ENCODE measurements at regions of chr10 and their contacts with region 1.

Region 1: DNA sequence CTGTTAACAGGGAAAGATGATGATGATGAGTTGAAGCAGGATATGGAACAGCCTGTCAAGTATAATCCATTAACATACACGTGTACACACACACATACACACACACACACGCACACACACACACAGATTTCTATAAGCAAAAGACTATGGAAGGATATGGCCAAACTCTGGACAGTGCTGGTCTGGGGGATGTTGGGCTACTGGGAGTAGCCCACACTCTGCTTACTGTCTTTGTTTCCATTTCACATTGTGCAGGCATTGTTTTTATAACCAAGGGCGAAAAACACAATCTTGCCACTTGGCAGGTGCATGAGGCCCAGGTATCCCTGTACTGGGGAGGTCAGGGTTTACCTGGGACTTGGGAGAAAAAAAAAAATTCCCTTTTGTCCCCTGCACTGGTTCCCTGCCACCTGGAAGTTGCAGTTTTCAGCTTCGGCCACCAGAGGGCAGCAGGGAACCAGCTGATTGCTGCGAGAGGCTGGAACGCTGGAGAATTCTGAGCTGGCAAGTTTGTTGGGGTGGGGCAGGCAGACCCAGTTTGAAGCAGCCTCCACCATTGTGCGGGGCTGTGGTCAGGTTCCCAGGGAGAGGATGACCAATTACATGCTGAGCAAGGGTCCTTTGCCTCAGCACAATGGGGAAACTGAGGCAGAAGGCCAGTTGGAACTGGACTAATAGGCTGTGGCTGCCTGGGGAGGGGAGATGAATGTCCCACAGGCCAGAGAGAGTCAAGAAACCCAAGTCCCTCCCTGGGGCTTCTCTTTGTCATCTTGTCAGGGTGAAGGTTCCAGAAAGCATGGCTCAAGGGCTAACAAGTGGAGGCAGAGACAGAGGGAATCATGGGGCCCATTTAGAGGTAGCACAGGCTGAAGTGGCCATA is 27.3 kb downstream of the PPIF start:
- DNase-seq: peak; percentile 56
- H3K4me3 ChIP-seq: no peak overlapping the region
- H3K27ac ChIP-seq: no peak overlapping the region
- H3K4me1 ChIP-seq: peaks cover 2% of the 10 kb centered on the region
- H3K27me3 ChIP-seq: no peaks in the 10 kb centered on the region
- CTCF ChIP-seq: peak; percentile 98 to 99

Region 2: GRCh38 chr10:79400146-79401004 is 25.8 kb after region 1 on chr10:
- CTCF ChIA-PET with region 1: no interaction called
- dilution Hi-C with region 1: no loop called
- in situ Hi-C with region 1: no loop called
- intact Hi-C with region 1: loop called (anchors 1 kb)
- DNase-seq: no peak
- H3K4me3 ChIP-seq: no peak overlapping the region
- H3K27ac ChIP-seq: no peak overlapping the region
- H3K4me1 ChIP-seq: peaks cover 28% of the 10 kb centered on the region
- H3K27me3 ChIP-seq: no peaks in the 10 kb centered on the region
- CTCF ChIP-seq: peak; percentile 70 to 78

Region 3: GRCh38 chr10:79409726-79410085 is 35.2 kb after region 1 on chr10:
- CTCF ChIA-PET with region 1: no interaction called
- dilution Hi-C with region 1: loop called (anchors 5 kb)
- in situ Hi-C with region 1: no loop called
- intact Hi-C with region 1: no loop called
- DNase-seq: no peak
- H3K4me3 ChIP-seq: no peak overlapping the region
- H3K27ac ChIP-seq: no peak overlapping the region
- H3K4me1 ChIP-seq: no peaks in the 10 kb centered on the region
- H3K27me3 ChIP-seq: no peaks in the 10 kb centered on the region
- CTCF ChIP-seq: no peak

Region 4: DNA sequence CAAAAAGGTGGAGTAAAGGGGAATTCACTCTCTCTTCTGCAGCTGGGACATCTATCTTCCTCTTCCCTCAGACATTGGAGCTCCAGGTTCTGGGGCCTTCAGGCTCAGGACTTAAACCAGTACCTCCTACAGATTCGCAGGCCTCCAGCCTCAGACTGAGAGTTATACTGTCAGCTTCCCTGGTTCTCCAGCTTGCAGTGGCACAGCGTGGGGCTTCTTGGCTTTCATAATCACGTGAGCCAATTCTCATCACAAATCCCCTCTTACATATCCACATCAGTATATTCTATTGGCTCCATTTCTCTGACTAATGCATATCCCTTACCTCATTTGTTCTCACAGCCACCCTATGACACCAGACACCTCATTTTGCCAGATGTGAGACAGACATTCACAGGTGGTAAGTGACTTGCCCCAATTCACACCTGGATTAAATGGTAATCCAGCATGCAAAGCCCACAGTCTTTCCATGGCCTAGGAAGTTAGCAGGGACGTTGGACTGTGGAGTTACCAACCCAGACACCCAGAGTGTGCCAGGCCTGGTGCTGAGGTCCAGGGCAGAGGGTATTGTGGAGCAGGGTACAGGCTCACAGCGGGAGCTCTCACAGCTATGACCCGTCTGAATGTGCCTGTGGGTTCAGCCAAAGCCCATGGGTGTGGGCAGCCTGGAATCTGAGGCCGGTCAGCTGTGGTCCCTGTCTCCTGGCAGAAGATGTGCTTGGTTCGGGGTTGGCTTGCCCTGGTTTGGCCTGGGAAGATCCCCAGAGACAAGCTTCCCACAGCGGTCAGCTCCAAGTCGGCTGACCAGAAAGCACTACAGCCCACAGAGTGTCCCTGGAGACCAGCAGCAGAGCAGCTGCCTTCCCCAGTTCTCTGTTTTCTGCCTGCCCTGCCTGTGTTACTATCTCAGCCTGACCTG is 89.3 kb after region 1 on chr10:
- CTCF ChIA-PET with region 1: interaction called, 6 read pairs
- dilution Hi-C with region 1: loop called (anchors 5 kb)
- in situ Hi-C with region 1: loop called (anchors 5 to 10 kb)
- intact Hi-C with region 1: loop called (anchors 1 kb)
- DNase-seq: no peak
- H3K4me3 ChIP-seq: no peak overlapping the region
- H3K27ac ChIP-seq: no peak overlapping the region
- H3K4me1 ChIP-seq: no peaks in the 10 kb centered on the region
- H3K27me3 ChIP-seq: no peaks in the 10 kb centered on the region
- CTCF ChIP-seq: no peak

Region 5: DNA sequence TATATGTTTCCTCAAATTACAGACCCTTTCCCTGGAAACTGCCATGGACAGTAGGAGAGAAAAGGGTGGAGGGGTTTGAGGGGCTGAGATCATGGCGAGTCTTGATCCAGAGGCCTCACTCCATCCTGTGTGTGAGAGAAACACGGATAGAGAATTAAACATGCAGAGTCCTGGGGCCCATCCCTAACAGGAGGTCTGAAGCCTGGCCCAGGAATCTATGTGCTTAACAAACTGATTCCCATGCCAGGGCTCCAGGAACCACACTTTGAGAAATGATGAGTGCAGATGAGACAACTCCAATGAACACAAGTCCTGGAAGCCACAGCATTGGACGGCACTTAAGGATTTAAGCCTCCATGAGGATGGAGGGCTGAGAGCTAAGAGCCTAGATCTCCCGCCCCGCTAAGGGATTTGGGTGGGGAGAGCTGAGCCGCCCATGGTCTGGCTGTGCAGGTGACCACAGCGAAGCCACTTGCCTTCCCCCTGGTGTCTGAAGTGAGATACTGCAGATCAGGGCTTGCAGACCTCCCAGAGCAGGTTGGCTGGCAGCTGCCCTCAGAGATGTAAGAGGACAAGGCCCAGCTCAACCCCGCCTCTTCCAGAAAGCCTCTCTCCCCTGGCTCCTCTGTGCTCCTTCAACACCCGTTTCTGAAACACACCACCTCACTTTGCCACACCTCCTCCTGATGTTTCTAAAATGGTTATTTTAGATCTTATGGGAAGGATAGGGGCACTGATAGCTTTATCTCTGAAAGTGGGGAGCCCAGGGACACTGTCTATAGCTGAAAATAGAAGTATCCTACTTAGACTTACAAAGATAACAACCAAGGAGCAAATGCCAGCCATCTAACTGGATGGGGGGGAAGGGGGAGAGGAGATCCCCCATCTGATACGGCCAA is 113.0 kb after region 1 on chr10:
- CTCF ChIA-PET with region 1: interaction called, 3 read pairs
- dilution Hi-C with region 1: no loop called
- in situ Hi-C with region 1: no loop called
- intact Hi-C with region 1: loop called (anchors 5 kb)
- DNase-seq: peak; percentile 23
- H3K4me3 ChIP-seq: no peak overlapping the region
- H3K27ac ChIP-seq: peak overlapping the region; percentile 17
- H3K4me1 ChIP-seq: peaks cover 22% of the 10 kb centered on the region
- H3K27me3 ChIP-seq: no peaks in the 10 kb centered on the region
- CTCF ChIP-seq: peak; percentile 43 to 51

Region 6: DNA sequence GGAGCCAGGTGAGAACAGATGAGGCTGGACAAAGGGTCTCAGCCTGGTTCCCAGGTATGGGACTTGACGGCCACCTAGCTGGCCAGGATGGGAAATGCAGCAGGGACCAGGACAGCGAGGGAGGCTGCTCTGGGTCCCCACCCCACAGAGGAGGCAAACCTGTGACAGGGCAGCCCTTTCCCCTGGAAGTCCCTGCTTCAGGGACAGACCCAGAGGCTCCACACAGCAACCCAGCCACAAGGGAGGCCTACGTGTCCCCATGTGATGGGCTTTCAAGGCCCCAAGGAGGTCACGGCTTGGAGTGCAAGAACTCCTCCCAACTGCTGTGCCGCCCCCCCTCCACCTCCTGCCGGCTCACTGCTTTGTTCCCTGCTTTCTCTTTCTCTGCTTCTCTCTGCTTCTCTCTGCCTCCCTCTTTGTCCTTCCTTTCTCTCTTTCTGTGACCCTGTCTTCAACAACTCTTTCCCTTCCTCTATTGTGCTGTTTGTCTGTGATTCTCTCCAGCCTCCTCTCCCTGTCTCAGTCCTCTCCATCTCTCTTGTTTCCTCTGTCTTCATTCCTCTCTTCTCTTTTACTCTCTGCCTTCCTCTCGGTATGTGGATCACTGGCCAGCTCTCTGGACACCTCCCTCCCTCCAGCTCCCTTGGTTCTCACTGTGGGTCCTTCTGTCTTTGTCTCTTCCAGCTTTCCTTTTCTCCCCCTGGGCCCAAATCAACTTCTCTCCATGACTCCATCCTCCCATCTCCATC is 128.2 kb after region 1 on chr10:
- CTCF ChIA-PET with region 1: no interaction called
- dilution Hi-C with region 1: no loop called
- in situ Hi-C with region 1: no loop called
- intact Hi-C with region 1: loop called (anchors 1 kb)
- DNase-seq: peak; percentile 23
- H3K4me3 ChIP-seq: no peak overlapping the region
- H3K27ac ChIP-seq: no peak overlapping the region
- H3K4me1 ChIP-seq: no peaks in the 10 kb centered on the region
- H3K27me3 ChIP-seq: no peaks in the 10 kb centered on the region
- CTCF ChIP-seq: peak; percentile 29 to 64

Region 7: GRCh38 chr10:79581044-79581443 is 206.5 kb after region 1 on chr10:
- CTCF ChIA-PET with region 1: no interaction called
- dilution Hi-C with region 1: no loop called
- in situ Hi-C with region 1: no loop called
- intact Hi-C with region 1: no loop called
- DNase-seq: no peak
- H3K4me3 ChIP-seq: no peak overlapping the region
- H3K27ac ChIP-seq: no peak overlapping the region
- H3K4me1 ChIP-seq: no peaks in the 10 kb centered on the region
- H3K27me3 ChIP-seq: no peaks in the 10 kb centered on the region
- CTCF ChIP-seq: no peak

Region 8: GRCh38 chr10:79929409-79929904 is 554.9 kb after region 1 on chr10:
- CTCF ChIA-PET with region 1: no interaction called
- dilution Hi-C with region 1: no loop called
- in situ Hi-C with region 1: no loop called
- intact Hi-C with region 1: loop called (anchors 1 kb)
- DNase-seq: peak; percentile 54
- H3K4me3 ChIP-seq: no peak overlapping the region
- H3K27ac ChIP-seq: no peak overlapping the region
- H3K4me1 ChIP-seq: peaks cover 4% of the 10 kb centered on the region
- H3K27me3 ChIP-seq: peaks cover 10% of the 10 kb centered on the region
- CTCF ChIP-seq: peak; percentile 71 to 93